ENCODE measurements at regions of chr1 and their contacts with region 1.

Region 1: DNA sequence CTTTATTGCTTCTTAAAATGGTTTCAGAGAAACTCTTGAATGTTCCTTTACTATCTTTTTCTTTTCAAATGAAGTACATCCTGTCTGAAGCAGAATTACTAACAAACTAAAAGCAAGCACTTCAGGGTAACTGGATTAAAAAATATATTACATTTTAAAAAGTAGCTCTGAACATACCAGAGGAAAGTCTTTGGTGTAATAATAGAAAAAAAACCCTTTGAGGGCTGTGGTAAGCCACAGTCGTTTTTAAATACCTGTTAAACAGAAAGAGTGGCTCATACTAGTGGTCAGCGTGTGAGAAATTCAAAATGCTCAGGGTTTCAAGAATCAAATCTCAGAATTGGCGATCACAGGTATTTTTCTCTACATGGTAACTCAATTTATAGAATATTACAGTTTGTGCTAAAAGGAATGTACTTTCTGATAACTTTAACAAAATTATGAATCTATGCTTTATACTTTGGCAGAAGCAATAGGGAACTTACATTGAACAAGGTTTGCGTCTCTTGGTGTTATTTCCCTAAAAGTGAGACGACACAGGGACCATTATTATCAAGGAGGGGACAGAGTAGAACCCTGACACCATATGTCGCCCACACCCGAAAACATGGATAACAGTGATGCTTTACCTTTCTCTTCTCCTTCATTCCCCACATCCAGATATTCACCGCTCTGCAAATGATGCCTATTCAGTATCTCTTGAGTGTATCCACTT is 97.0 kb upstream of the DPH5 start:
- DNase-seq: peak; percentile 29
- ATAC-seq: peak; percentile 72
- H3K4me3 Mint-ChIP-seq: peak overlapping the region; percentile 19
- H3K27ac Mint-ChIP-seq: peak overlapping the region; percentile 30
- H3K4me1 Mint-ChIP-seq: peaks cover 49% of the 10 kb centered on the region
- H3K27me3 Mint-ChIP-seq: no peaks in the 10 kb centered on the region

Region 2: GRCh38 chr1:100931716-100932115 is 190.9 kb before region 1 on chr1:
- CTCF ChIA-PET with region 1: no interaction called
- POLR2A ChIA-PET with region 1: no interaction called
- intact Hi-C with region 1: no loop called
- DNase-seq: no peak
- ATAC-seq: no peak
- H3K4me3 Mint-ChIP-seq: no peak overlapping the region
- H3K27ac Mint-ChIP-seq: peak overlapping the region; percentile 55
- H3K4me1 Mint-ChIP-seq: peaks cover 61% of the 10 kb centered on the region
- H3K27me3 Mint-ChIP-seq: no peaks in the 10 kb centered on the region

Region 3: DNA sequence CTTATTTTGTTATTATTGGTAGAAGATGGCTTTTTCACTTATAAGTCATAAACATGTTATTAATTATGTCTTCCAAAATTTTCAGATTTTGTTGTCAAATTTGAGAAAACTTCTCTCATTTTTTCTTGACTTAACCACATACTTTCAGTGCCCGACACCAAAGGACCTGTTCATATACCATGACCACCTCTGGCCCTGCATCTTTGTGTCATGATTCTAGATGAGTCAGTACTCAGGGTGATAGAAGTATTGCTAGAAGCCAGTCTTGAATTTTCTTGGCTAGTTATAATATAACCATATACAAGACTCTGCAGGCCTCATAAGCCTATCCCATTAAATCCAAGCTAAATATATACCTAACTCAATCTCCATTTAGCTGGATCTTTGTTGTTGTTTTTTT is 61.6 kb before region 1 on chr1:
- CTCF ChIA-PET with region 1: no interaction called
- POLR2A ChIA-PET with region 1: no interaction called
- intact Hi-C with region 1: loop called in 1 of 2 experiments (anchors 5 kb)
- DNase-seq: no peak
- ATAC-seq: no peak
- H3K4me3 Mint-ChIP-seq: no peak overlapping the region
- H3K27ac Mint-ChIP-seq: no peak overlapping the region
- H3K4me1 Mint-ChIP-seq: peaks cover 30% of the 10 kb centered on the region
- H3K27me3 Mint-ChIP-seq: no peaks in the 10 kb centered on the region

Region 4: DNA sequence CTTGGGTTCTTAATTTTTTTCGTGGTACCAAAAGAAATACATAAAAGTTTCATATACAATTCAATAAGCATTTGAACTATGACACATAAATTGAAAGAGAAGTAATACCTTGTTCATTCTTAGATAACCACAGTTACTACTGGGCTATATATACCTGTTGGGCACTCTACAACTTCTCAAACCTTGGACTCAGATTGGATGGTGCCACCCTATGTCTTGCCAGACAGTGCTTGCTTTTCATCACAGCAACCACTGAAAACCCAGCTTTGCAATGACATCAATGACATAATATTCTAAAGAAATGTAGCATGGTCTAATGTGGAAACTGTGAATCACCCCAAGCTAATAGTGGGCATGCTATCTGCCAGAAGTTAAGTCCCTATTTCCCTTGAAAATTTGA is 34.2 kb before region 1 on chr1:
- CTCF ChIA-PET with region 1: interaction called, 7 read pairs
- POLR2A ChIA-PET with region 1: no interaction called
- intact Hi-C with region 1: loop called in 1 of 2 experiments (anchors 5 kb)
- DNase-seq: no peak
- ATAC-seq: peak; percentile 76
- H3K4me3 Mint-ChIP-seq: no peak overlapping the region
- H3K27ac Mint-ChIP-seq: no peak overlapping the region
- H3K4me1 Mint-ChIP-seq: peaks cover 35% of the 10 kb centered on the region
- H3K27me3 Mint-ChIP-seq: no peaks in the 10 kb centered on the region